GM10248 (cell line): ENCODE measurements at regions of chr12 and their contacts with region 1.

Region 1: DNA sequence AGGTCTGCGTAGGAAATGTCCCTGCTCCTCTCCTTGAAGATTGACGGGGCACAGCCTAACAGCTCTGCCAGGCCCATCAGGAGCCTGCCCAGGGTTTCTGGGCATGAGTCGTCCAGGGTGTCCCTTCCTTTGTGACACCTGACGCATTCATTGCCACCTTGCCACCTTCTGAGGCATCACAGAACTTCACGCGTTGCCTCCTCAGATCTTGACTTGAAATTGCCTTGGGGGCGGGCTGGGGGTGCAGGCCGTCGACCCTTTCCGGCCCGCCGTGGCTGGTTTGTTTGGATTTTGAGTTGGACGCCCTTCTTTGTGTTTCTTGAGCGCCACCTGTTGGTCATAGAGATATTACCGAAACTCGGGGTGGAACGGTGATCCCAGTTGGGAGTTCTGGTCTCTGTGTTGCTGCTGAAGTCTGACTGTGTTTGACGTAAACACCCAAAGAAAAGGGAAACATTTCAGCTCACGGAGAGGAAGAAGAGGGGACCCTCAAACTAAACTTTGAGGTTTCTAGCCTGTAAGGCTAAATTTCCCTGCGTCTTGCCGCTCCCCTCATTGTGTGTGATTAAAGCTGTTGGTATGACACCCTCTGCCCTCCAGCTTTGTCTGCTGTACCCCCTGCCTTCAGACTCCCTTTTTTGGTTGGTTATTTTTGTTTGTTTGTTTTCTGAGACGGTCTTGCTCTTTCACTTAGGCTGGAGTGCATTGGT is 44.6 kb downstream of the MLXIP start:
- DNase-seq: peak; percentile 83
- CTCF ChIP-seq: peak; percentile 70

Region 2: DNA sequence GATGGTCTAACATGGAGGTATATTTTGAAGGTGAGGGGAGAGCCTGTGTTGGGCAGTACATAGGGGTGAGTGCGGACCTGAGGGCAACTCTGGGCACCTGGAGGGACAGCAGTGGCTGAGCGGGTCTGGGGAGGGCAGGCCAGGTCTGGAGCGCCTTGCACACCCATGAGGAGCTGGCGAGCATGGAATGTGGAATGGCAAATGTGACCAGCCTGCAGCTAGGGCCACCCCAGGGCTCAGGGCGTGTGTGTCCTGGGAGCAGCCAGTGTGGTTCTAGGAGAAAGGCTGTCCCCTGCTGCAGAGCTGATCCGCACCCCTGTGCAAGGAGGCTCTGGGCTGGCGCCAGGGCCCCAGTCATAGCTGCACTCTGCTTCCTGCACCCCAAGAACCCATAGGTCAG is 77.1 kb before region 1 on chr12:
- CTCF ChIA-PET with region 1: interaction called, 209 read pairs
- POLR2A ChIA-PET with region 1: no interaction called
- DNase-seq: no peak
- CTCF ChIP-seq: no peak

Region 3: GRCh38 chr12:122064025-122064777 is 59.0 kb before region 1 on chr12:
- CTCF ChIA-PET with region 1: interaction called, 27 read pairs
- POLR2A ChIA-PET with region 1: no interaction called
- DNase-seq: peak; percentile 55
- CTCF ChIP-seq: peak; percentile 9

Region 4: GRCh38 chr12:122097927-122098756 is 25.1 kb before region 1 on chr12:
- CTCF ChIA-PET with region 1: interaction called, 10 read pairs
- POLR2A ChIA-PET with region 1: no interaction called
- DNase-seq: no peak
- CTCF ChIP-seq: no peak

Region 5: DNA sequence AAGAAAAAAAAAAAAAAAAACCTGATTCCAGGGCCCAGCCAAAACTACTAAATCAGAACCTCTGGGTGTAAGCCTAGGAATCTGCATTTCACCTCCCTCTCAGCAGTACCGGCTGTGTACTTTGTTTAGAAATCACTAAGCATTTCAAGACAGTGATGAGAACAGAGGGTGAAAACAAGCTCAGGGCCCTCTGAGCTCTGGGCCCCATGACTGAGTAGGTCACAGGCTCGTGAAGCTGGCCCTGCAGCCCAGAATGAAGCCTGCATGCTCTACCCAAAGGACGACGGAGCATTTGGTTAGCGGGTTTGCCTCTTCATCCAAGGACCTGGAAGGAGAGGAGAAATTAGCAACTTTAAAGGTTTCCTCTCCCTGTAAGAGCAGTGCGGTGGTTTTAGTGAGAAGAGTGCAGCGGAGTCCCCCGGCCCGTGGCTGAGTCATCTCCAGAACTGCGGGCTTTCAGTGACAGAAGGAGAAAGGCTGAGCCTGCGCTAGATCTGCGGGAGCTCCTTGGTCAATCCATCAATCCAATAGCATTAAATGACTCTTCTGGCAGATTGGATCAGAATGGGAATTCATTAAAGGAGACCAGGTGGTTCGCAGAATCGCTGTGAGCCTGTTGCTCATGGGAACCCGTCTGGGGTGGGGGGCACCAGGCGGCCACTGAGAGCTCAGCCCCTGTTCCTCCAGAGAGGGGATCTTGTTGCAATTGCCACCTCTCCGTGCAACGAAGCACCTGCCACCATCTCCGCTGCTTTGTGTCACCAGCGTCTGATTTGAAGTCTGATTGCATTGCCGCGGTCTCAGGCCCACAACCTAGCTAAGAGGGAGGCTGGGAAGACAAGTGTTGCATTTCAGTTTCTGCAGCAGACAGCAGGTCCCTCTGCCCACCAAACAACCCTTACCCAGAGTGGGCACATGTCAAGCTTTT is 43.5 kb after region 1 on chr12:
- CTCF ChIA-PET with region 1: interaction called, 11 read pairs
- POLR2A ChIA-PET with region 1: no interaction called
- DNase-seq: peak; percentile 68
- CTCF ChIP-seq: no peak

Region 6: DNA sequence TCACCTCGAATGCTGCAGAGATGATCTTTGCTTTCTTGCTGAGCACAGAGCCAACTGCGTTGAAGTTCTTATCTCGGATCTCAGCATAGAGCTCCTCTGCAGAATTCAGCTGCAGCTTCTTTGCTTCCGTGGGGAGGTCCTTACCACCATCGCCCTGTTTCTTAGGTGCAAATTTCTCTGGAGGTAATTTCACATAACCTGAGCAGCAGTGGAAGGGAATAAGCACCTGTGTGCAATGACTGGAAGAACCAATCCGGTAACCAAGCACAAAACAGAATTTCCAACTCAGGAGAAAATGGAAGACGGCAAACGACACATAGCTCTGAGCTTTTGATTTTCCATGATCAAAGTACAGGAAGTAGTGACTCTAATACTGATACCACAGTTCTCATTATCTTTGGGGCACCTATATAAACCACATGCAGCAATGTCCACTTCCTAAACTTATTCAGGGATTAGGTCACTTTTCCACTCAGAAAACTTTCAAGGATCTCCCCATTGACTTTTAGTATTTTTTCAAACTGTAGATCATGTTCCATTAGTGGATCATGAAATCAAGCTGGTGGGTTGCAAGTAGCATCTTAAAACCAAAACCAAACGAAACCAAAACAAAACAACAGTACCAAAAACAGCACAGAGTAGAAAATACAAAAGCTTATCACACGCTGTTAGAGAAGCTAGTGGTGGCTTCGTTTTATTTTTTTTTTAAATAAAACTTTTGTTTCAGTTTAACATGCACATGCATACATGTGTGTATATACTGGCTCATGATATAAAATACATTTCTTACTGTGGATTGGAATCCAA is 121.6 kb after region 1 on chr12:
- CTCF ChIA-PET with region 1: no interaction called
- POLR2A ChIA-PET with region 1: no interaction called
- DNase-seq: peak; percentile 33
- CTCF ChIP-seq: no peak

Region 7: DNA sequence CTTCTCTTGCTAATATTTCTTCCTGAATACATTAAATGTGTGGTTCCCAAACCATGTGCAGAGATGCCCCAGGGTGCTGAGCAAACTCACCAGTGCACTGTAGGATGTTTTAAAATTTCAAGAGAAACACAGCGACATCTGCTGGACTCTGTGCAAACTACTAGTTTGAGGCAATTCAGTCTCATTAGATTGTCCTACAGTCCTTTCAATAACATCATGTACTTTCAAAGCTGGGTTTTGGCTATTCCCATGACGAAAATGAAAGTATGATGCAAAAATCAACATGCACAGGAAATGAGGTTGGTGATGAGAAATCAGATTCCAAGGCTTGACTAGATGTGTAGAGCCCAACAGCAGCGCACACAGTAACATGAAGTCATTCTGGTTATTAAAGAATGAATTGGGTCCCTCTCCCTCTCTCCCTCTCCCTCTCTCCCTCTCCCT is 233.0 kb after region 1 on chr12:
- CTCF ChIA-PET with region 1: no interaction called
- POLR2A ChIA-PET with region 1: no interaction called
- DNase-seq: peak; percentile 70
- CTCF ChIP-seq: peak; percentile 72